Gastrocnemius medialis (tissue), 4 donors: ENCODE measurements at regions of chr1 and their contacts with region 1.

Region 1: DNA sequence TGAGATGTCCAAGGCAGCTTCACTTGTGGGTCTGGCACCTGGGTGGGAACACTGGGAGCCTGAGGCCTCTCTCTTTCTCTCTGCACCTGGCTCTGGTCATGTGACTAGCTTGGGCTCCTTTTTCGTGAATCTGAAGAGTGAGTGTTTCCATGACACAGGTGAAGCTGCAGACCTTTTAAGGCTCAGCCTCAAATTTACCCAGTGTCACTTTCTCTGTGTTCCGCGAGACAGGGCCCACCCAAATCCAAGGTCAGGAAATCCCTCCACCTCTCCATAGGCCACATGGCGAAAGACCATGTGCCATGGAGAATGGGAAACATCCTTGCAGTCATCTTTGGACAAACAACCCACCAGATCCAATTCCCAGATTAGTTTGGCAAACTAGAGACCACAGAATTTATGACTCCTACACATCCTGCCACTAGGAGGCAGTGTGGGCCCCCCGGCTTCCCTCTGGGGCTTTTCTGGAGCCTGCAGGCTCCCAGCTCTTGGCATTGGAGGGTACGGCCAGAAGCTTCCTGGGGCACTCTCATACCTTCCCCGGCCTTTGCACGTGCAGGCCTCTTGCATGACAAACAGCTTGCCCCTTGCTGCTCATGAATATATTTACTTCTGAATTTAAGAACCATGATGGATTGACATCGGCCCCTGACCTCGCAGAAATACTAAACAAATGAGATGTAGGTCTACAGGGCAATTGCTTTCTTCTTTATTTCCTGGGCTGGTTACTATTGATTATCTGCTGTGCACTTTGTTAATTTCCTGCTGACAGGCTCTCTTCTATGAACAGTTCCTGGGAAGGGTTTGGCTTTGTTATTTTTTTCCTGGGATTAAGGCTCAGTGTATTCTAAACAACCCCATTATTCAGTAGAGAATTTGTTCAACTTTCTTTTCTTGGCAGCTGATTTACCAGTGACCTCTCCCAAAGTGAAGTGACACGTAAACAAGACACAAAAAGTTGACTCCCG is 180.7 kb downstream of the KAZN start:
- DNase-seq: no peak
- ATAC-seq: no peak
- H3K4me3 ChIP-seq: no peak overlapping the region
- H3K27ac ChIP-seq: no peak overlapping the region
- H3K4me1 ChIP-seq: no peaks in the 10 kb centered on the region
- H3K27me3 ChIP-seq: no peaks in the 10 kb centered on the region
- CTCF ChIP-seq: peak in 3 of 5 experiments; percentile 13 to 53 (median 41)
- POLR2A ChIP-seq: no peak

Region 2: DNA sequence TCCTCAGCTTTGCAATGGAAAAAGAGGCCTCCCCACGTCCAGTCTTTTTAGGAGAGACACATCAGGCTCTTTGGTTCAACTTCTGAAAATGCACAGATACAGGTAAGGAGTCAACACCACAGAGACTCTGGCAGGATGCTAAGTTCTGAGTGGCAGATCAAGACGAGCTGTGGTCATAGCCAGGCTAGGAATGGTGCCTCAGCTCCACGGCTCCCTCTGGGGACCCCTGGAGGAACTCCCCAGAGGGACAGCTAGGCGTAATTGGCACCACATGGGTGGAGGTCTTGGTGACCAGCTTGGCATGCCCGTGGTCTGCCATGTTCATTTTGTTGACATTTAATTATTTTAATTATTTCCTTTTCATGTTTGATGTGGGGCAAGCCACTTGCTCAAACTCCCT is 25.4 kb after region 1 on chr1:
- in situ Hi-C with region 1: no loop called
- intact Hi-C with region 1: no loop called
- DNase-seq: no peak
- ATAC-seq: no peak
- H3K4me3 ChIP-seq: no peak overlapping the region
- H3K27ac ChIP-seq: no peak overlapping the region
- H3K4me1 ChIP-seq: no peaks in the 10 kb centered on the region
- H3K27me3 ChIP-seq: no peaks in the 10 kb centered on the region
- CTCF ChIP-seq: no peak
- POLR2A ChIP-seq: no peak

Region 3: DNA sequence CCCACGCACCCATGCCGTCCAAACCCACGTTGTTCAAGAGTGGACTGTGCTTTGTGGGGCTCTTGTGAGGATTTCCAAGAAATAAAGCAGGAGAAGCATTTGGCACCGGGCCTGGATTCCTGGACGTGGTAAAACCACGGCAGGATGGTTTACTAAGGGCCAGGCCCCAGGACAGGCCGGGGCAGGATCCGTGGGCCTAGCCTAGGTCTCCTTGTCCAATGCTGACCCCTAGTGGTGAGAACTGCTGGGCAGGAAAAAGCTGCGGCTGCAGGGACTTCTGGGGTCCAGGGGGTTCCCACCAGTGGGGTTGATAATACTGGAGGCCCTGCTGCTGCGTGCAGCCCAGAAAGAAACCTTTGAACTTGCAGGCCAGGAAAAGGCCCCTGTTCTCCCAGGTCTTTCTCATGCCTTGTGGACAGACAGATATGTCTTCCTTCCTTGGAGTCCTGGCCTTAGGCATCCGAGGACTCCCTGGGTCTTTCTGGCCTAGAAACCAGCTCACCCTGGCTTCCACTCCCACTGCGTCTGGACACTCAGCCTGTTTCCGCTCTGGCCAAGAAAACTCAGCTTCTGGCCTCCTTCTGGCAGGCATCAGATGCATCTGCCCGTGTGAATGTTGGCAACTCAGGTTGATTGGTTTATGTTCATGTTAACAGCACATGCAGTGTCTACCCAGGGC is 267.4 kb after region 1 on chr1:
- in situ Hi-C with region 1: loop called in 1 of 4 experiments (anchors 10 kb)
- intact Hi-C with region 1: no loop called
- DNase-seq: peak in 1 of 2 donors; percentile 23
- ATAC-seq: no peak
- H3K4me3 ChIP-seq: no peak overlapping the region
- H3K27ac ChIP-seq: no peak overlapping the region
- H3K4me1 ChIP-seq: no peaks in the 10 kb centered on the region
- H3K27me3 ChIP-seq: no peaks in the 10 kb centered on the region
- CTCF ChIP-seq: peak; percentile 45 to 77 (median 68)
- POLR2A ChIP-seq: no peak